ENCODE measurements at regions of chr11 and their contacts with region 1.

Region 1: DNA sequence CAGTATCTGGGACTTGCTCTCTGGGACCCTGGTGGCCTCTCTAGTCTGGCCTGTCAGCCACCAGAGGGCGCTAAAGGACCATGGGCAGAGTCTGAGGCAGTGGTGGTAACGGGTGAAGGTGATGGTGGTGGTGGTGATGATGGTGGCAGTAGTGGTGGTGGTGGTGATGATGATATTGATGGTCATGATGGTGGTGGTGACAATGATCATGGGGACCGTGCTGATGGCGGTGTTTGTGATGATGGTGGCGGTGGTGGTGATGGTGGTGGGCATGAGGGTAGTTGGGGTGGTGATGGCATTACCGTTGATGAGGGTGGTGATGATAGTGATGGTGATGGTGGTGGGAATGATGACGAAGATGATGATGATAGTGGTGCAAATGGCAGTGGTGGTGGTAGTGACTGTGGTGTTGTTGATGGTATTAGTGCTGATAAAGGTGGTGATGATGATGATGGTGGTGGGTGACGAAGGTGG is 16.0 kb downstream of the TRPM5 start:
- DNase-seq: peak; percentile 13 to 86
- H3K4me3 ChIP-seq: no peak overlapping the region
- H3K4me1 ChIP-seq: no peaks in the 10 kb centered on the region
- H3K27me3 ChIP-seq: no peaks in the 10 kb centered on the region

Region 2: GRCh38 chr11:1233331-1233715 is 1195.0 kb before region 1 on chr11:
- in situ Hi-C with region 1: no loop called
- DNase-seq: no peak
- H3K4me3 ChIP-seq: no peak overlapping the region
- H3K4me1 ChIP-seq: no peaks in the 10 kb centered on the region
- H3K27me3 ChIP-seq: no peaks in the 10 kb centered on the region; the same call in 1 of the 2 replicates

Region 3: GRCh38 chr11:2708151-2708581 is 279.8 kb after region 1 on chr11:
- in situ Hi-C with region 1: no loop called
- DNase-seq: no peak
- H3K4me3 ChIP-seq: no peak overlapping the region
- H3K4me1 ChIP-seq: no peaks in the 10 kb centered on the region
- H3K27me3 ChIP-seq: no peaks in the 10 kb centered on the region

Region 4: DNA sequence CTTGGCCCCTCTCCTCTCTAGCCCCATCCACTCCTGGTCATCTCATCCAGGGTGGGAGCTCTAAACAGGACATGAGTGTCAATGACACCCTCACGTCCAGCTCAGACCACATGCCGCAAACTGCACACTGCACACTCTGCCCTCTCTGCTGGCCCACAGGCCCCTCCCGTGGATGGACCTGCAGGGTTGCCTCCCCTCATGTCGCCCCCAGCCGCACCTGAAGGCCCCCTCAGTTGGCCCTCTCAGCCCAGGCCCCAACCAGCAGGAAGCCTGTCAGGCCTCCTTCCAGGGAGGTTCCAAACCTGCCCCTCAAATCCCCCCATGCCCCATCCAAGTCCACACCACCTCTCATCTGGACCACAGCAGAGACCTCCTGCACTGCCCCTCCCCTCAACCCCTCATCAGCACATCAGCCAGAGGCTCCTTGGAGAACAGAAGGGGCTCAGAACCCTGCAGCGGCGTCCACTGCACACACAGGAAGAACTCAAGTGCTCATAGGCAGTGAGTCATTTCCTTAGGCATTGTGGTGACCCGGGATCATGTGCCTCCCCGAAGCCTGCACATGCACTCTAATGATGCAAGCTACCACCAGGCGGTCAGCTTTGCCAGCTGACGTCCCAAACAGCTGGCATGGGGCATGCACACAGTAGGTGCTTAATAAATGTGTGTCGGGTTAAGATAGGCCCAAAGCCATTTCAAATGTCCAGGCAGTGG is 470.2 kb after region 1 on chr11:
- in situ Hi-C with region 1: loop called (anchors 5 kb)
- DNase-seq: no peak
- H3K4me3 ChIP-seq: no peak overlapping the region
- H3K4me1 ChIP-seq: peaks cover 7% of the 10 kb centered on the region
- H3K27me3 ChIP-seq: no peaks in the 10 kb centered on the region